ENCODE measurements at regions of chr2 and their contacts with region 1.

Region 1: DNA sequence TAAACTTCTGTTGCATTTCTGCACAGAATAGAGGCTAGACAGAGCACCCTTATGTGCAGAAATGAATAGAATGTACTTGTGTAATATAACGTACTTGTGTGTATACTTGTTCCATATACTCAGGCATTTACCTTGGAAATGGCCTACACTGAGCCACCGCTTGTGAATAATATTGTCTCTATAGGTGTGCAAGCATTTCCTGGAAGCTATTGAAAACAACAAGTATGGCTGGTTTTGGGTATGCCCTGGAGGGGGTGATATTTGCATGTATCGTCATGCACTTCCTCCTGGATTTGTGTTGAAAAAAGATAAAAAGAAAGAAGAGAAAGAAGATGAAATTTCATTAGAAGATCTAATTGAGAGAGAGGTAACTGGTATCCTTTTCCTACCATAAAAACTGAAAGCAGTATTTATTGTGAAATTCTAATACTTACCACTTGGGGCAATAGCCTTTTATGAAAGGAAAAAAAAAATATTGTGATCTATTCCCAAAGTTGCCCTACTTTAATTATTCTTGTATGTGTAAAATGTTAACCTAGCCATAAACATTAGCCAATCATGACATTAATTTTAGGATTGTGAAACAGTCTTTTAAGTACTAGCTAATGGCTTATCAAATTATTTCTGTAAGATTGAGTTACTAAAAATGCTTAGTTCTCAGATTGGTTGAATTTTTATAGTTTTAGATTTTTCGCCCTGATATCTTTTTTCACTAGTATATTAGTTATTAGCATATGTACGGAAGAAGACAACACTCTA is 18.0 kb downstream of the ZC3H15 start:
- DNase-seq: no peak
- ATAC-seq: no peak

Region 2: DNA sequence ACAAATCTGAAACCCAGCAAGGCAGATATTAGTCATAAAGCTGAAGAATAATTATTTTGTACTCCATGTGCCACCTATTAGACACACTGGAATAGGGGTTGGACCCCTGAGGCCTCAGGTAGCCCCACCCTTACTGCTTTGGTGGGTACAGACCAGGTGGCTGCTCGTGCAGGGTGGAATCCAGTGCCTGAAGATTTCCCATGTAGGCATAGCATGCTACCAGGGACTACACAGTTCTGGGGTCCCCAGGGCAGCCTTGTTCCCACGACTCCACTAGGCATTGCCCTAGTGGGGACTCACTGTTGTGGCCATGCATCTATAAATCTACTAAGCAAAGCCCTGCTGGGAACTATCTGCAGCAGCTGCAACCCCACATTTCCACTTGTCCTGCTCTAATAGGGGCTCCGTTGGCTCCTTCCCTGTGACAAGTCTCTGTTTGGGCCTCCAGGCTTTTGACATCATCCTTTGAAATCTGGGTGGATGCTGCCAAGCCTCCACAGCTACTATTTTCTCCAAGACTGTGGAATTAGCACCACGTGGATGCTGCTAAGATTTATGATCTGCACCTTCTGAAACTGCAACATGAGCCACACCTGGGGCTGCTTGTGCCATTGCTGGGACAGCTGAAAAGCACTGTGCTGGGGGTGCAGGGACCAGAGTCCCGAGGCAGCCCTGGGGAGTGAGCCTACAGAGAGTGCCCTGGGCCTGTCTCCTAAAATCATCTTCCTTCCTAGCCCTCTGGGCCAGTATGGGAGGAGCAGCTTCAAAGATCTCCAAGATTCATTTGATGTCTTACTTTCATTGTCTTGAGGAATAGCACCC is 461.6 kb before region 1 on chr2:
- intact Hi-C with region 1: no loop called
- DNase-seq: peak; percentile 61
- ATAC-seq: no peak

Region 3: GRCh38 chr2:186641807-186642321 is 137.8 kb after region 1 on chr2:
- intact Hi-C with region 1: loop called (anchors 1 kb)
- DNase-seq: no peak
- ATAC-seq: peak; percentile 80

Measured in Right ventricle myocardium inferior (tissue), 1 donor.